ENCODE measurements at regions of chr17 and their contacts with region 1.

Region 1: GRCh38 chr17:29705386-29705785 is 82.7 kb upstream of the CORO6 start:
- DNase-seq: no peak
- ATAC-seq: no peak
- H3K4me3 ChIP-seq: no peak overlapping the region
- H3K27ac ChIP-seq: no peak overlapping the region
- H3K4me1 ChIP-seq: 0 out of 2 replicates have a peak, but pooled peaks cover 1% of the 10 kb centered on the region
- H3K27me3 ChIP-seq: no peaks in the 10 kb centered on the region
- CTCF ChIP-seq: no peak

Region 2: GRCh38 chr17:29568331-29569244 is 136.8 kb before region 1 on chr17 and contains the start of gene TP53I13:
- CTCF ChIA-PET with region 1: no interaction called
- POLR2A ChIA-PET with region 1: no interaction called
- intact Hi-C with region 1: no loop called
- DNase-seq: peak; percentile 74
- ATAC-seq: peak; percentile 51
- H3K4me3 ChIP-seq: peak within 1 kb of the TSS; percentile 85
- H3K27ac ChIP-seq: peak within 1 kb of the TSS; percentile 19; the same call in 1 of the 2 replicates
- H3K4me1 ChIP-seq: peaks cover 7% of the 10 kb centered on the region; the same call in 1 of the 2 replicates
- H3K27me3 ChIP-seq: no peaks in the 10 kb centered on the region
- CTCF ChIP-seq: no peak
- total RNA-seq, gene TP53I13: 45.0 and 61.7 TPM in 2 replicates

Region 3: DNA sequence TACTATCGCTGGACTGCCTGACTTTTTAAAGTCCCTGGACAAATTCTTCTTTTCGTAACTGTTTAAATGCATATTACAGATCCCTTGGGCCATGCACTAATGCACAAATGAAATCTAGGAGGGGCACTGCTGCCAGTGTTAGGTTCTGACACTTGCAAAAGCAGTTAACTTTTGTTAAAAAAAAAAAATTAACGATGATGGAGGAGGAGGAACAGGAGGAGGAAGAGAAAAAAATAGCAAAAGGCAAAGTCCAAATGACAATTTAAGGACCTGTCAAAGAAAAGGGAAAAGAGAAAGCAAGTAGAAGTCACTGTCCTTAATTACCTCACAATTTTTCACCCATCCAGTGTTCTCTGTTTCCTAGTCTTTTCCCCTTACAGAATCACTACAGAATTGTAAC is 15.2 kb after region 1 on chr17:
- CTCF ChIA-PET with region 1: no interaction called
- POLR2A ChIA-PET with region 1: no interaction called
- intact Hi-C with region 1: no loop called
- DNase-seq: no peak
- ATAC-seq: no peak
- H3K4me3 ChIP-seq: no peak overlapping the region
- H3K27ac ChIP-seq: no peak overlapping the region
- H3K4me1 ChIP-seq: no peaks in the 10 kb centered on the region
- H3K27me3 ChIP-seq: no peaks in the 10 kb centered on the region
- CTCF ChIP-seq: no peak

Region 4: GRCh38 chr17:29847527-29848400 is 142.4 kb after region 1 on chr17:
- CTCF ChIA-PET with region 1: no interaction called
- POLR2A ChIA-PET with region 1: interaction called, 36 read pairs
- intact Hi-C with region 1: no loop called
- DNase-seq: no peak
- ATAC-seq: no peak
- H3K4me3 ChIP-seq: no peak overlapping the region
- H3K27ac ChIP-seq: no peak overlapping the region
- H3K4me1 ChIP-seq: no peaks in the 10 kb centered on the region
- H3K27me3 ChIP-seq: no peaks in the 10 kb centered on the region
- CTCF ChIP-seq: no peak